ENCODE measurements at regions of chr1 and their contacts with region 1.

Region 1: DNA sequence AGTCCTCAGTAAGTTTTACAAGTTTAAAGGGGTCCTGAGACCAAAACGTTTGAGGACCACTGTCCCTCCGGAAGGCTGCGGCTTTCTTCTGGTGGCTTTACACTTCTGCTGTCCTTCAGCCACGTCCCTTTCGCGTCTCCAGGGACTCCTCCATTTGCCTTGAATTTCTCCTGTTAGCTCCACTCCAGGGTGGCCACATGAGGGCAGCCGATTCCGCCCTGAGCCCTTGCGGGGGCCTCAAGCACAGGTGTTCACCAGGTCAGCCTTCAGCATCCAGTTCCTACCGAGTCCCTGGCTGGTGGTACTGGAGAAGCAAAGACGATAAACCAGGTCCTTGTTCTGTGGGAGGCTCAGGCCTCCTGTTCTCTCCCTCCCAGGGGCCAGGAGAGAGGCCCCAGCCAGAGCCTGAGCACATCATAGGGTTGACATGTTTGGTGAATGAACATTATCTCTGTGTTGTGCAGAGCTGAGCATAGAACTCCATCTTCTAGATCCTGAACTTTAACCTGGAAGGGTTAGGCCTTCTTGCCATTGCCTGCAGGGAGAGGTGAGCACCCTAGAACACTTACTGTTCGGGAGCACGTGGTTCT is 27.4 kb upstream of the COQ8A start:
- DNase-seq: peak; percentile 75
- H3K4me3 ChIP-seq: no peak overlapping the region
- H3K27ac ChIP-seq: no peak overlapping the region
- H3K4me1 ChIP-seq: peaks cover 0 to 25% (median 6%) of the 10 kb centered on the region in 4 donors
- H3K27me3 ChIP-seq: no peaks in the 10 kb centered on the region
- CTCF ChIP-seq: peak; percentile 61 to 73 (median 66)
- EP300 ChIP-seq: no peak
- POLR2A ChIP-seq: no peak

Region 2: GRCh38 chr1:226973898-226974543 is 61.3 kb after region 1 on chr1:
- in situ Hi-C with region 1: loop called in 1 of 4 experiments (anchors 10 kb)
- intact Hi-C with region 1: no loop called
- DNase-seq: peak; percentile 33
- H3K4me3 ChIP-seq: no peak overlapping the region
- H3K27ac ChIP-seq: peak overlapping the region; percentile 77 to 85 (median 82)
- H3K4me1 ChIP-seq: peaks cover 18 to 29% (median 24%) of the 10 kb centered on the region in 4 donors
- H3K27me3 ChIP-seq: no peaks in the 10 kb centered on the region
- CTCF ChIP-seq: no peak
- EP300 ChIP-seq: no peak
- POLR2A ChIP-seq: no peak

Region 3: DNA sequence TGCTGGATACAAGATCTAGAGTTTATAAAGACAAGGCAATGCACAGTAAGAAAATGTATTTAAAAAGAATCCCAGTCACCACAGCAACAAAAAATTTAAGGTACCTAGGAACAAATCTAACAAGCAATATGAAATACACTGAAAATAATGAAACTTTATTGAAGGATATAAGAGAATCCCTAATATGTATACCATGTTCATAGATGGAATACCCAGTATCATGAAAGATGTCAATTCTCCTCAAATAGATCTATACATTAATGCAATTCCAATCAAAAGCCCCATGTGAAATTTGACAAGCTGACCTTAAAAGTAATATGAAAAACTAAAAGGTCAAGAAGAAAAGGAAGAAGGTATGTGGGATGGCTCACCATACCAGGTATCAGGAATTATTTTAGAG is 136.6 kb after region 1 on chr1:
- in situ Hi-C with region 1: no loop called
- intact Hi-C with region 1: no loop called
- DNase-seq: no peak
- H3K4me3 ChIP-seq: no peak overlapping the region
- H3K27ac ChIP-seq: no peak overlapping the region
- H3K4me1 ChIP-seq: no peaks in the 10 kb centered on the region
- H3K27me3 ChIP-seq: no peaks in the 10 kb centered on the region
- CTCF ChIP-seq: no peak
- EP300 ChIP-seq: no peak
- POLR2A ChIP-seq: no peak

Region 4: GRCh38 chr1:227102056-227102455 is 189.4 kb after region 1 on chr1:
- in situ Hi-C with region 1: no loop called
- intact Hi-C with region 1: no loop called
- DNase-seq: no peak
- H3K4me3 ChIP-seq: no peak overlapping the region
- H3K27ac ChIP-seq: no peak overlapping the region
- H3K4me1 ChIP-seq: peaks cover 0 to 10% (median 4%) of the 10 kb centered on the region in 4 donors
- H3K27me3 ChIP-seq: no peaks in the 10 kb centered on the region
- CTCF ChIP-seq: no peak
- EP300 ChIP-seq: no peak
- POLR2A ChIP-seq: no peak

Region 5: DNA sequence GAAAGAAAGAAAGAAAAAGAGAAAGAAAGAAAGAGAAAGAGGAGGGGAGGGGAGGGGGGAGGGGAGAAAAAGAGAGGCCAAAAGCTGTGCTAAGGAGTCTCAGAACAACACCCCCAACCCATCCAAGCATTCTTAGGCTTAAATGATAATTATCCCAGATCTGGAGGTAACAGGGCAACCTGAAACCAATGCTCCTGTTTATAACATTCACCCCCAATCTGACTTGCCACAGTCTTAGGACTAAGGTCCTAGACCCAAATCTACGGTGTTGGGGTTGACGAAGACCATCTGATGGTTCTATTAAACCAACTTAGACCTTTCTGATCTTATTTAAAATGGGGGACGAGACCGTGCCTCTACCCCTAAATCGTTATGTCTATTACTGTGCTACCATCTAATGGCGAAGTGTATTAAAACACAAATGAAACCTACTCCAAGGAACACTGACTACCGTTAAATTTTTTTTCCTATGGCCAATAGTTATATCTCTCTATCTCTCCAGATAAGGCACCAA is 524.9 kb after region 1 on chr1:
- in situ Hi-C with region 1: loop called (anchors 10 to 25 kb)
- intact Hi-C with region 1: no loop called
- DNase-seq: no peak
- H3K4me3 ChIP-seq: peak overlapping the region in 2 of 4 donors; percentile 19 to 43
- H3K27ac ChIP-seq: no peak overlapping the region
- H3K4me1 ChIP-seq: peaks cover 0 to 5% (median 2%) of the 10 kb centered on the region in 4 donors
- H3K27me3 ChIP-seq: no peaks in the 10 kb centered on the region
- CTCF ChIP-seq: peak; percentile 31 to 60 (median 41)
- EP300 ChIP-seq: no peak
- POLR2A ChIP-seq: no peak

Region 6: GRCh38 chr1:227449051-227449450 is 536.4 kb after region 1 on chr1:
- in situ Hi-C with region 1: loop called (anchors 10 to 25 kb)
- intact Hi-C with region 1: no loop called
- DNase-seq: no peak
- H3K4me3 ChIP-seq: no peak overlapping the region
- H3K27ac ChIP-seq: no peak overlapping the region
- H3K4me1 ChIP-seq: no peaks in the 10 kb centered on the region
- H3K27me3 ChIP-seq: peaks cover 11% of the 10 kb centered on the region
- CTCF ChIP-seq: peak in 3 of 5 experiments; percentile 17 to 22 (median 18)
- EP300 ChIP-seq: no peak
- POLR2A ChIP-seq: no peak